Activated CD4-positive, alpha-beta memory T cell treated with anti-CD3 and anti-CD28 coated beads, Interleukin-2, amount 10 ng/mL, durations not matched to agents 7 days and 5 days (primary cell): ENCODE measurements at regions of chr10 and their contacts with region 1.

Region 1: DNA sequence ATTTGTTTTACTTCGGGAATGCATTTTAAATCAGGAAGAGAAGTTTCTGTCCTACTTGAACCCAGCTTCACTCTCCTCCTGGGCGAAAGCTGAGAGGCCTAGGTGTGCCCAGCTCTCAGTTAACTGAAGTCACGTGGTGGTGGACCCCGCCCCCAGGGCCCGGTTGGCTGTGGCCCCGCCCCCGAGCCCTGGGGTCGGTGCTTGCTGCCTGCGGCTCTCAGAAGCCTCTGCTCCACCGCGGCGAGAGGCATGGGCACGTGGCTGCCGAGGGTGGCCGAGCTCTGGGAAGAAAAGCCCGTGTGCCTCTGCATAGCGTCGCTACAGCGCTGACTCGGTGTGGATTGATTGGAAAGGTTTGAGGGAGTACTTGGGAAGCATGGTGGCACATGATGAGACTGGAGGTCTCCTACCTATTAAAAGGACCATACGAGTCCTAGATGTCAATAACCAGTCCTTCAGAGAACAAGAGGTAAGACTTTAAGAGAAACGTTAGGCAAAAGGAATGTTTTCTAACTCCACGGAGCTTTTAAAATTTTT is 34.1 kb downstream of the NET1 start:
- DNase-seq: peak; percentile 80
- H3K4me3 Mint-ChIP-seq: peak overlapping the region; percentile 73
- H3K27ac Mint-ChIP-seq: peak overlapping the region; percentile 69
- H3K4me1 Mint-ChIP-seq: peaks cover 62% of the 10 kb centered on the region
- H3K27me3 Mint-ChIP-seq: no peaks in the 10 kb centered on the region

Region 2: GRCh38 chr10:5428133-5428532 is 18.3 kb before region 1 on chr10:
- CTCF ChIA-PET with region 1: interaction called, 27 read pairs
- POLR2A ChIA-PET with region 1: no interaction called
- DNase-seq: no peak
- H3K4me3 Mint-ChIP-seq: no peak overlapping the region
- H3K27ac Mint-ChIP-seq: no peak overlapping the region
- H3K4me1 Mint-ChIP-seq: no peaks in the 10 kb centered on the region
- H3K27me3 Mint-ChIP-seq: no peaks in the 10 kb centered on the region

Region 3: GRCh38 chr10:5434017-5434753 is 12.3 kb before region 1 on chr10:
- CTCF ChIA-PET with region 1: interaction called, 27 read pairs
- POLR2A ChIA-PET with region 1: interaction called, 4 read pairs
- DNase-seq: no peak
- H3K4me3 Mint-ChIP-seq: no peak overlapping the region
- H3K27ac Mint-ChIP-seq: no peak overlapping the region
- H3K4me1 Mint-ChIP-seq: peaks cover 14% of the 10 kb centered on the region
- H3K27me3 Mint-ChIP-seq: no peaks in the 10 kb centered on the region

Region 4: DNA sequence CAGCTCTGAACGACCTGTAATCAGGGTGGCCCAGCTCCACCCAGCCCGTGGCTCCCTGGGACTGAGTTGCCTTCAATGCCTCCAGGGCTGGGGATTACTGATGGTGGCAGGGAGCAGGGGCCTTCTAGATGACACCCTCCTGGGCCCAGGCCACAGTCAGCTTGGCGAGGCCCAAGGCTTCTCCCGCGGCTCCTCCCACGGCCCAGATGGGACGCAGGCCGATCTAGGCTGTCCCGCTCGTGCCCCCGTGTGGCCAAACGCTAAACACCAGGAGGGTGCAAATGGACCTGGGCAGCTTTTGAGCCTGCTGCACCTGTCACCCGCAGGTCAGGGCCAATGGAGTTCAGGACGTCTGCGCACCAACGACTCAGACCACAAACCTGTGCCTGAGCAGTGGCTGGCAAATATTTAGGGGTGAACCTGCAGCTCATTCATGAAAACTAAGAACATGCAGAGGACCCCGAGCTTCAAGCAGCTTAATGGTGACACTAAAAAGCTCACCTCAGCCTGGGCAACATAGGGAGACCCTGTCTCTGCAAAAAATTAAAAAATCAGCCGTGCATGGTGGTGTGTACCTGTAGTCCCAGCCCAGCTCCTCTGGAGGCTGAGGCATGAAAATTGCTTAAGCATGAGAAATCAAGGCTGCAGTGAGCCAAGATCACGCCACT is 176.8 kb after region 1 on chr10:
- CTCF ChIA-PET with region 1: interaction called, 204 read pairs
- POLR2A ChIA-PET with region 1: interaction called, 16 read pairs
- DNase-seq: peak; percentile 85
- H3K4me3 Mint-ChIP-seq: no peak overlapping the region
- H3K27ac Mint-ChIP-seq: no peak overlapping the region
- H3K4me1 Mint-ChIP-seq: peaks cover 14% of the 10 kb centered on the region
- H3K27me3 Mint-ChIP-seq: peaks cover 5% of the 10 kb centered on the region

Region 5: DNA sequence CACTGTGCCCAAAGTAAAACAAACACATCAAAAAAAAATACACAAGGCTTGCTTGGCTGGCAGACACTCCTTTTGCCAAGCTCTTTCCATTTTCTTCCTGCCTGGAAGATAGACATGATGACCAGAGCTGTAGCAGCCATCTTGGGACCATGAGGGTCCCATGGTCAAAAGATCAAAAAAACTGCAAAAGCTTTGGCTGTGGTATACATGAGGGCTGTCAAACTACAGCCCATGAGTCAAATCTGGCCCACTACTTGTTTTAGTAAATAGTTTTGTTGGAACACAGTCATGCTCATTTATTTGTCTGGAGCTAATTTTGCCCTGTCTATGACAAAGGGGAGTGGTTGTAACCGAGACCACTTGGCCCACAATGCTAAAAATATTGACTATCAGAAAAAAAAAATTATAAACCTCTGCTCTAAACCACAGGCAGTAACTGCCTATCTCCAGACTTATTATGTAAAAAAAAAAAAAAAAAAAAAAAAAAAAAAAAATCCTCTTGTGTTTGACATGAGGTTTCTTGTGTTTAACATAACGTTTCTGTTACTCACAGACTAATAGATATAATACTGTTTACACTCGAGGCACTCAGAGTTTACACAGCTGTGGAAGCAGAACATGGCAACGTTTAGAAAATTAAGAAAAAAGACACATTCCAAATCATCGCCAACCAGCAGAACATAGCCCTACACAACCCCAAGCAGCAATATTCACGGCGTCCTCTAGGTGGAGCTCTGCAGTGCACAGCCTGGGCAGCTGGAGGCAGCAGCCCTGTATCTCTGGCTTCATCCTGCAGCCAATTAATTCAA is 183.0 kb after region 1 on chr10:
- CTCF ChIA-PET with region 1: interaction called, 204 read pairs
- POLR2A ChIA-PET with region 1: no interaction called
- DNase-seq: peak; percentile 87
- H3K4me3 Mint-ChIP-seq: peak overlapping the region; percentile 25
- H3K27ac Mint-ChIP-seq: peak overlapping the region; percentile 78
- H3K4me1 Mint-ChIP-seq: peaks cover 35% of the 10 kb centered on the region
- H3K27me3 Mint-ChIP-seq: peaks cover 5% of the 10 kb centered on the region